Left cardiac atrium (tissue), 4 donors: ENCODE measurements at regions of chr1 and their contacts with region 1.

Region 1: GRCh38 chr1:52296345-52296744 is 69.7 kb downstream of the CC2D1B start:
- DNase-seq: no peak
- ATAC-seq: peak in 1 of 2 donors; percentile 71

Region 2: GRCh38 chr1:51956528-51957509 is 339.5 kb before region 1 on chr1:
- intact Hi-C with region 1: no loop called
- DNase-seq: no peak
- ATAC-seq: no peak

Region 3: GRCh38 chr1:52125736-52126359 is 170.5 kb before region 1 on chr1:
- intact Hi-C with region 1: loop called in 1 of 2 experiments (anchors 1 kb)
- DNase-seq: no peak
- ATAC-seq: no peak

Region 4: GRCh38 chr1:52141513-52142219 is 154.7 kb before region 1 on chr1 and contains the start of gene ZFYVE9:
- intact Hi-C with region 1: loop called (anchors 5 kb)
- DNase-seq: peak; percentile 83
- ATAC-seq: peak; percentile 94 to 97
- total RNA-seq, gene ZFYVE9: 15.5 to 16.1 TPM